Esophagus muscularis mucosa (tissue), 4 donors: ENCODE measurements at regions of chr1 and their contacts with region 1.

Region 1: GRCh38 chr1:27603681-27604578 is at the start of gene AHDC1:
- DNase-seq: peak; percentile 97
- H3K4me3 ChIP-seq: peak within 1 kb of the TSS; percentile 80 to 100 (median 97)
- H3K27ac ChIP-seq: peak within 1 kb of the TSS; percentile 96 to 99 (median 97)
- H3K4me1 ChIP-seq: peaks cover 37 to 73% (median 64%) of the 10 kb centered on the region in 4 donors
- H3K27me3 ChIP-seq: no peaks in the 10 kb centered on the region
- CTCF ChIP-seq: peak; percentile 23 to 50 (median 41)
- EP300 ChIP-seq: no peak
- POLR2A ChIP-seq: peak; percentile 92
- total RNA-seq, gene AHDC1: 14.7 to 54.3 (median 35.4) TPM

Region 2: DNA sequence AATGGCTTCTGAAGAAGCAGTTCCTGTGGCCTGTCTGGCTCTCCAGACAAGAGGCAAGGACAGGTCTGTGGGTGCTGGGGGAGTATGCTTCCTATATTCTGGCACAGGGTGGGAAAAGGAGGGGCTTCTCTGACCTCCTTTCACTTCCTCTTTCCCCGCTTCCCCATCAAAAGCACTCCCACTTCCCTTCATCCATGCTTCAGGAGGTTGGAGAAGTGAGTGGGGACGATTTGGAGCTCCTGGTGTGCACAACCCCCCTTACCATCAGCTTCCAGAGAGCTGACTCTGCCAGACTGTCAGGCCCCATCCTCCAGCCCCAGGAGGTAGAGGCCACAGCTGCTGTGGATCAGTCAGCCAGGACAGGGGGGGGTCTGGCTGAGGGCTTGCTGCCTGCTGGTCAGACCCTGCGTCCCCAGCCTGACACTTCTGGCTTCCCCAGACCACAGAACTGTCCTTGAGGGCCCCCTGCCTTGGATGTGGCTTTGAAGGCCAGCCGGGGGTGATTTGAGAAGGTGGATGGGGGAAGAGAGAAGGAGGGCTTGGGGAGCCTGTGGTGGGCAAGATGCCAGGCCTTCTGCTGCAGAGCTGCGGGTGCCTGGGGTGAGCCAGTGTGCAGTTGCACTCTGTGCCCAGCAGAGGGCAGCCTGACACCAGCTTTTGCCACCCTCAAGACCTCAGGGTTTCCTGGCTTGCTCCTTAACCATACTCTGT is 303.4 kb before region 1 on chr1:
- intact Hi-C with region 1: loop called (anchors 5 kb)
- DNase-seq: peak; percentile 95
- H3K4me3 ChIP-seq: no peak overlapping the region
- H3K27ac ChIP-seq: peak overlapping the region; percentile 87 to 96 (median 92)
- H3K4me1 ChIP-seq: peaks cover 34 to 50% (median 48%) of the 10 kb centered on the region in 4 donors
- H3K27me3 ChIP-seq: no peaks in the 10 kb centered on the region
- CTCF ChIP-seq: peak in 2 of 3 experiments; percentile 98 to 100
- EP300 ChIP-seq: no peak
- POLR2A ChIP-seq: no peak

Region 3: GRCh38 chr1:27402349-27402754 is 201.6 kb before region 1 on chr1:
- intact Hi-C with region 1: loop called (anchors 5 kb)
- DNase-seq: peak; percentile 95
- H3K4me3 ChIP-seq: no peak overlapping the region
- H3K27ac ChIP-seq: peak overlapping the region; percentile 73 to 79 (median 76)
- H3K4me1 ChIP-seq: peaks cover 82 to 87% (median 84%) of the 10 kb centered on the region in 4 donors
- H3K27me3 ChIP-seq: no peaks in the 10 kb centered on the region
- CTCF ChIP-seq: peak; percentile 71 to 82 (median 73)
- EP300 ChIP-seq: no peak
- POLR2A ChIP-seq: no peak

Region 4: GRCh38 chr1:27416387-27417111 is 187.4 kb before region 1 on chr1:
- intact Hi-C with region 1: loop called (anchors 5 kb)
- DNase-seq: no peak
- H3K4me3 ChIP-seq: no peak overlapping the region
- H3K27ac ChIP-seq: peak overlapping the region; percentile 82 to 86 (median 85)
- H3K4me1 ChIP-seq: peaks cover 51 to 75% (median 63%) of the 10 kb centered on the region in 4 donors
- H3K27me3 ChIP-seq: no peaks in the 10 kb centered on the region
- CTCF ChIP-seq: peak; percentile 69 to 76 (median 73)
- EP300 ChIP-seq: no peak
- POLR2A ChIP-seq: no peak

Region 5: DNA sequence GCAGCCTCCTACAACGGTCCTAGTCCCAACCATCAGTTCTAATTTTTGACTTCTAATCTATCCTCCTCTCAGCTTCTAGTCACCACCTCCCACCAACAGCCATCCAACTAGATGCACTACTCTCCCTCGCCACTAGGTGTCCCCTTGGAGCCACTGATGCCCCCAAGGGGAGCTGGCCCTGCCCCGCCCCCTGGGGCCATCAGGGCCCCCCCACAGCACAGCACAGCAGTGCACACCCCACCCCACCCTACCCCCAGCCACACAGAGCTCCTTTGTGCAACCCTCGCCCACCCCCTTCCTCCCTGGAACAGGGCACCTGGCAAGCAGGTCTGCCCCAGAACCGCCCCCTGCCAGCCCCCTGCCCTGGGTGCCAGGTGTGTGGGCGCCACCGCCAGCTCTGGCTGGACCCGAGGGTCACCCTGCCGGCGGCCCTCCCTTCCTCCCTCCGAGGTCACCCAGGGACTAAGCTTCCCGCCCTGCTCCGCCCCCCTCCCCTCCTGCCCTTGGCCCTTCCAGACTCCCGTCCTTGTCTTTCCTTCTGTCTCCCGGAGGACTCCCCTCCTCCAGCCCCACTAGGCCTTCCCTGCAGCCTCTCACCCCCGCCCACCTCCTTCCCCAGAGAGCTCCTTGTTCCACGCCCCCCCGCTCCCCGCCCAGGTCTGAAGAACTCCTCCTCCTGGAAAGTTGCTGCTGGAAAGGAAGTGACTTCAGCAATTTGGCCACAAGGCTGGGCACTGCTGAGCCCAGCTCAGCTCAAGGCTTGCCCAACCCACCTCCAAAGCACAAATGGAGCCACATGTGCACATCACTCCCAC is 46.9 kb before region 1 on chr1:
- intact Hi-C with region 1: loop called (anchors 2 kb)
- DNase-seq: peak; percentile 98
- H3K4me3 ChIP-seq: peak overlapping the region; percentile 12 to 47 (median 34)
- H3K27ac ChIP-seq: peak overlapping the region; percentile 75 to 98 (median 89)
- H3K4me1 ChIP-seq: peaks cover 70 to 84% (median 80%) of the 10 kb centered on the region in 4 donors
- H3K27me3 ChIP-seq: no peaks in the 10 kb centered on the region
- CTCF ChIP-seq: peak; percentile 96 to 98 (median 97)
- EP300 ChIP-seq: no peak
- POLR2A ChIP-seq: no peak

Region 6: DNA sequence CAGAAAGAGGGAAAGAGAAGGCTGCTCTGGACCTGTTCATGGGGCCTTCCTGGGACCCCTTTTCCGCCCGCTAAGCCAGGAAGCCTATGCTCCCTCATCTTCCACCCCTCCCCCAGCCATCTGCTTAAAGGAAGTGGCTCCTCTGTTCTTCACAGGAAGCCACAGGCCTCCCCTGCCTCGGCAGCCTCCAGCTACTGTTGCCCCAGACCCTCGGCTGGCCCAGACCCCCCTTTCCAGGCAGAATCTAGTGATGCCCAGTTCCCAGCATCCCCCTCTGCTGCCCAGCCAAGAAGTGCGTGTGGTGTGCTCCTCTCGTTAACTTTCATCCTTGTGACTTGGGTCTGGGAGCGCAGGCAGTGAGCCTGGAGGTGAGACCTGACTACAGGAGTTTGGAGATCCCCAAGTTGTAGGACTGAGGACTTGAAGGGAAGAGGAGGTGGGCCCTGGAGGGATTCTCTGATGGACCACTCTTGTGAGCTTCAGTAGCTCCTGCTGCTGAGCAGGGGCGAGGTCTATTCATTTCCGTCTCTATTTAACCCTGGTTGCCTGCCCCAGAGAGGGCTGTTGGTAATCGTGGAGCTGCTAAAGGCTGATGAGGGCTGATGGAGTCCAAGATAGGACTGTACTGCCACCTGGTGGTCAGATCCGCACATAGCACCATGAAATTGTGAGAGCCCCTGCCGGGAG is 58.9 kb after region 1 on chr1:
- intact Hi-C with region 1: loop called (anchors 2 kb)
- DNase-seq: peak; percentile 98
- H3K4me3 ChIP-seq: no peak overlapping the region
- H3K27ac ChIP-seq: peak overlapping the region; percentile 38 to 67 (median 46)
- H3K4me1 ChIP-seq: peaks cover 39 to 48% (median 40%) of the 10 kb centered on the region in 4 donors
- H3K27me3 ChIP-seq: no peaks in the 10 kb centered on the region
- CTCF ChIP-seq: peak; percentile 80 to 99 (median 88)
- EP300 ChIP-seq: no peak
- POLR2A ChIP-seq: no peak